IMR-90 (cell line): ENCODE measurements at regions of chr2 and their contacts with region 1.

Region 1: DNA sequence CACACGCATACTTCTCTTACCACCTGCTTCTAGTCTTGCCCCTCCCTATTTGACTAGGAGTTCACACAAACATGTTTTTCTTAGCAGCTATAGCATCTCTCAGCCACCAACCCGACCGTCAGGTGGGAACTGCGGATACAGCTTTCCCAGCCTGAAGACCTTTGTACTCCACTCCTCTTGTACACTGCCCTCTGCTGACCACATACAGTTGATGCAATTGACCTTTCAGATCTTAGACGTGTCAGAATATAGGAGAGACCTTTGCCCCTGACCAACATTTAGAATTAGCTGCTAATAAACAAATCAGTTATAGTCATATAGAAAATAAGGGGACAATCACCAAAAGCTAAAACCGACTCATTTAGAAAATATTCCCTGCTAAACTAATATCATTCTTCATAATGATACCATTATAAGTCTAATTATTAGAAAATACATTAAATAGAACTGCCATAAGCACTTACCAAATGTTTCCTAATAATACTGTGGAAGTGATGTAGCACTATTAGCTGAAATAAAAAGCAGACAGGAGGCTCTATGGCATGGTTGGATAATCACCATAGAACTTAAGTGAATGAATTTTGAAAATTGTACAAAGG is 208.4 kb downstream of the RAD51AP2 start:
- DNase-seq: peak; percentile 49
- ATAC-seq: peak; percentile 77
- H3K4me3 ChIP-seq: no peak overlapping the region
- H3K27ac ChIP-seq: no peak overlapping the region
- H3K4me1 ChIP-seq: no peaks in the 10 kb centered on the region
- H3K27me3 ChIP-seq: no peaks in the 10 kb centered on the region
- CTCF ChIP-seq: peak; percentile 51
- POLR2A ChIP-seq: no peak
- RAD21 ChIP-seq: peak; percentile 49; the same call in 1 of the 2 replicates

Region 2: DNA sequence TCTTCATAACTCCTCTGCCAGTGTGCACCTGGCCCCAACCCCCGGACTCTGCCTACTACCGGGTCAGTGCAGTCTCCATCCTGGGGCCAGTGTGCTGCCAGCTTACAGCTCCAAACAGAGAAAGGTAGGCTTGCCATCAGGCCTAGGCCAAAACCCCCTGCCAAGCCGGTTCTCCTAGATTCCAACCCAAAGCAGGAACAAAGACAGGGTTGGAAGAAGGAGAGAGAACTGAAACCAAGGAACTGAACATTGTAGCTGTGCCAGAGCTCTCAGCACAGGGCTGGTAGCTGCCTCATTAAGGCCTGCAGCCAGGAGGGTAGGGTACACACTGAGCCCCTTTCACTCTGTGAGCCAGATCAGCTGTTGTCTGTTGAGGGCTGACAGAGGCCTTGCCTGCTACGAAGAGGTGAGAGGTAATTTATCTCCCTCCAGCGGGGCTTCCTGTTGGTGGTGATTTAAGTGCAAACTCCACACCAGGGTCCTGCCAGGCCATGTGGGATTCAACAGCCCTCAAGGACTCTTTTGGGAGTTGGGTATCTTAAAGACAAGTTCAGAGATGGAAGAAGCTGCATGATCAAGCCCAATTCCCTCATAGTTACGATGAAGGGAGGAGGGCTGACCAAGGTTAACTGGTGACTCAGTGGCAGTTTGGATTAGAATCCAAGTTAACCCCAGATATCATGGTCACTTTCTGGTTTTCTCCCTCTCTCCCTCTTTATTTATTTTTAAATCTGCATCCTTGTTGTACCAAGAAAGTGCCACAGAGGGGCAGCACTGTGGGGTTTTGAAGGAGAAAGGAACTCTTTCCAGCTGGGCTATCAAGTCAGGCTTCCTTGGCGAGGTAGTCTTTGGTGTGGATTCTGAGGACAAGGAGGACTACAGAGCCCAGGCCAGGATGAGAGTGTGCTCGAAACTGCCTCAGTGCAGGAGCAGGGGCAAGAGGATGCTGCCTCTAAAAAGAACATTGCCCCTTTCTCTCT is 692.3 kb before region 1 on chr2:
- CTCF ChIA-PET with region 1: interaction called, 3 read pairs
- POLR2A ChIA-PET with region 1: no interaction called
- dilution Hi-C with region 1: no loop called
- in situ Hi-C with region 1: no loop called
- intact Hi-C with region 1: loop called (anchors 5 kb)
- DNase-seq: peak; percentile 56
- ATAC-seq: peak; percentile 40
- H3K4me3 ChIP-seq: no peak overlapping the region
- H3K27ac ChIP-seq: no peak overlapping the region
- H3K4me1 ChIP-seq: peaks cover 21% of the 10 kb centered on the region
- H3K27me3 ChIP-seq: no peaks in the 10 kb centered on the region
- CTCF ChIP-seq: peak; percentile 67
- POLR2A ChIP-seq: no peak
- RAD21 ChIP-seq: peak; percentile 70

Region 3: GRCh38 chr2:16773080-16773713 is 536.6 kb before region 1 on chr2:
- CTCF ChIA-PET with region 1: interaction called, 4 read pairs
- POLR2A ChIA-PET with region 1: no interaction called
- dilution Hi-C with region 1: no loop called
- in situ Hi-C with region 1: loop called (anchors 10 kb)
- intact Hi-C with region 1: loop called (anchors 1 kb)
- DNase-seq: peak; percentile 42
- ATAC-seq: peak; percentile 87
- H3K4me3 ChIP-seq: no peak overlapping the region
- H3K27ac ChIP-seq: no peak overlapping the region
- H3K4me1 ChIP-seq: no peaks in the 10 kb centered on the region
- H3K27me3 ChIP-seq: peaks cover 1% of the 10 kb centered on the region; the same call in 1 of the 2 replicates
- CTCF ChIP-seq: peak; percentile 56
- POLR2A ChIP-seq: no peak
- RAD21 ChIP-seq: peak; percentile 70